ENCODE measurements at regions of chr16 and their contacts with region 1.

Region 1: DNA sequence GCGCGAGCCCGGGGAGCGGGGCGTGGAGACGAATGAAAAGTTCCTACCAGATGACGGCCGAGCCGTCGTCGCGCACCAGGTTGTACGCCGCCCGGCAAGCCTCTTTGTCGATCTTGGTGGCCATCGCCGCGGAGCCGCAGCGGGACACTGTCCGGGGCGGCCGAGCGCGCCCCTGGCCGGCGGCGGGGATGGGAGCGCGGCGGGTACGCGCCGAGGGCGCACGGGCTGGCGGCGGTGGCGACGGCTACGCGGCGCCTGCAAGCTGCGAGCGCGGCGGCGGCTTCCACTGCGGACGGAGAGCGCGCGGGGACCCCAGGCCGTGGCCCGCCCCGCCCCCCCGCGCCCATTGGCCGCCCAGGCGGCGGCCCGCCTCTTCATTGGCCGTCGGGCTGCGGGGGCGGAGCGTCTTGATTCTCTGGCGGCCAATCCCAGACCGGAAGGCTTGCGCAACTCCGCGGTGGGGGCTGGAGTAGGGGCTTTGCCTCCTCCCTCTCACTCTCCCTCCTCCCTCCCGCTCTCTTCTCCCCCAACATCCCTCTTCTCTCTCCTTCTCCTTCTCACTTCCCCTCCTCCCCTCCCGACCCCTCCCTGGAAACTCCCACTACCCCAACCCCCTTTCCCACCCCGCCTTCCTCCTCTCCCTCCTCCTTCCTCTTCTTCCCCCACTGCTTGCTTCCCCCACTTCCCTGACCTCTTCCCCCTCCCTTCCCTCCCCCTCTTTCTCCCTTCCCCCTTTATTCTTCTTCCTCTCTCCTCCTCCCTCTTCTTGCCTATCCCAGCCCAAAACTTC is at the start of gene COTL1:
- DNase-seq: peak; percentile 88 to 97
- H3K4me3 ChIP-seq: peak within 1 kb of the TSS; percentile 74
- H3K27ac ChIP-seq: peak within 1 kb of the TSS; percentile 97
- H3K4me1 ChIP-seq: peaks cover 49% of the 10 kb centered on the region
- H3K27me3 ChIP-seq: no peaks in the 10 kb centered on the region
- CTCF ChIP-seq: no peak
- total RNA-seq, gene COTL1: 458 and 512 TPM in 2 replicates

Region 2: DNA sequence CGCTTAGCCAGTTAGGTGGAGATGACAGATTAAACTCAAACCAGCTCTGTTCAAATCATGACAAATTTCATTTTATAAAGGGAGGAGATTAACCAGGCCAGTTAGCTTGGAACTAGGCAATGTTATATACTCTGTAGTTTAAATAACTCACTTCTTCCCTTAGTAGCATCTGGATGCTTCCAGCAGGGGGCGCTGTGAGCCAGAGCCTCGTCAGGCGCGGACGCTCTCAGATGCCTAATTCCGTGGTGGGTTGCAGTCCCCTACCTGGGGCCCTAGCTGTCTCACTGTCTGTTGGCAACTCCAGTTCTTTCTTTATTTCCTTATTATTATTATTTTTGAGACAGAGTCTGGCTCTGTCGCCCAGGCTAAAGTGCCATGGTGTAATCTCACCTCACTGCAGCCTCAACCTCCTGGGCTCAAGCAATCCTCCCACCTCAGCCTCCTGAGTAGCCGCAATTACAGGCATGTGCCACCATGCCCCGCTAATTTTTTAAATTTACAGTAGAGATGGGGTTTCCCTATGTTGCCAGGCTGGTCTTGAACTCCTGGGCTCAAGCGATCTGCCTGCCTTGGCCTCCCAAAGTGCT is 340.7 kb before region 1 on chr16:
- CTCF ChIA-PET with region 1: no interaction called
- POLR2A ChIA-PET with region 1: no interaction called
- intact Hi-C with region 1: loop called (anchors 5 kb)
- DNase-seq: peak in 1 of 2 experiments; percentile 46
- H3K4me3 ChIP-seq: no peak overlapping the region
- H3K27ac ChIP-seq: no peak overlapping the region
- H3K4me1 ChIP-seq: no peaks in the 10 kb centered on the region
- H3K27me3 ChIP-seq: no peaks in the 10 kb centered on the region
- CTCF ChIP-seq: peak; percentile 93

Region 3: DNA sequence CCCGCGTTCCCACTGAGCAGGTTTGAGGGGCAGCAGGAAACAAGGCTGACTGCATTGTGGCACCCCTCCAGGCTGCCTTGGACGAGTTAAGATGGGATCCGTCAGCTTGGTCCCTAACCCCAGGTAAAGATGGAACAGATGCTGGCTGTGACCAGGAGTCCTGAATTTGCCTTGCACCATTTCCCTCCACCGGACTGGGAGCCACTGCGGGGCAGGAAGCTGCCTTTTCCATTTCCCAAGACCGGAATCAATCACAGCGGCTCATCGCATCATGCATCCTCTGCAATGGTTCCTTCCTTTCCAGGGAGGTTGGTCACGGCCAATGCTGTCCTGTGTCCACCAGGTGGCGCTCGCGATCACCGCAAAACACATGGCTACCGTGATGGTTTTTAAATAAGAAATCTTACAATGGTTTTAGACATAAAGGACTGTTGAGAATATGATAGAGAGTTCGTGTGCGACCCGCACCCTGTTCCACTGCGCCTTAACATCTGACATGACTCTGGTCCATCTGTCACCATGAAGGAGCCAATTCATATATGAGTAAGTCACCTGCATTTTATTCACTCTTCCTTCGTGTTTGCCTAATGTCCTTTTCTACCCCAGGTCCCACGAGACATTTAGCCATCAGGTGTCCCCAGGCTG is 106.7 kb before region 1 on chr16:
- CTCF ChIA-PET with region 1: interaction called, 14 read pairs
- POLR2A ChIA-PET with region 1: interaction called, 22 read pairs
- intact Hi-C with region 1: loop called (anchors 1 kb)
- DNase-seq: peak; percentile 66 to 76
- H3K4me3 ChIP-seq: no peak overlapping the region
- H3K27ac ChIP-seq: no peak overlapping the region
- H3K4me1 ChIP-seq: peaks cover 9% of the 10 kb centered on the region; the same call in 1 of the 2 replicates
- H3K27me3 ChIP-seq: no peaks in the 10 kb centered on the region
- CTCF ChIP-seq: peak; percentile 96

Region 4: GRCh38 chr16:84599521-84600202 is 18.3 kb before region 1 on chr16:
- CTCF ChIA-PET with region 1: no interaction called
- POLR2A ChIA-PET with region 1: interaction called, 20 read pairs
- intact Hi-C with region 1: loop called (anchors 1 kb)
- DNase-seq: no peak
- H3K4me3 ChIP-seq: no peak overlapping the region
- H3K27ac ChIP-seq: no peak overlapping the region; the same call in 1 of the 2 replicates
- H3K4me1 ChIP-seq: peaks cover 16% of the 10 kb centered on the region; the same call in 1 of the 2 replicates
- H3K27me3 ChIP-seq: no peaks in the 10 kb centered on the region
- CTCF ChIP-seq: no peak

Region 5: GRCh38 chr16:84970447-84971127 is 352.6 kb after region 1 on chr16:
- CTCF ChIA-PET with region 1: interaction called, 4 read pairs
- POLR2A ChIA-PET with region 1: interaction called, 6 read pairs
- intact Hi-C with region 1: loop called (anchors 2 kb)
- DNase-seq: peak; percentile 61 to 74
- H3K4me3 ChIP-seq: no peak overlapping the region
- H3K27ac ChIP-seq: no peak overlapping the region
- H3K4me1 ChIP-seq: peaks cover 10% of the 10 kb centered on the region
- H3K27me3 ChIP-seq: no peaks in the 10 kb centered on the region
- CTCF ChIP-seq: peak; percentile 95